IMR-90 (cell line): ENCODE measurements at regions of chr3 and their contacts with region 1.

Region 1: DNA sequence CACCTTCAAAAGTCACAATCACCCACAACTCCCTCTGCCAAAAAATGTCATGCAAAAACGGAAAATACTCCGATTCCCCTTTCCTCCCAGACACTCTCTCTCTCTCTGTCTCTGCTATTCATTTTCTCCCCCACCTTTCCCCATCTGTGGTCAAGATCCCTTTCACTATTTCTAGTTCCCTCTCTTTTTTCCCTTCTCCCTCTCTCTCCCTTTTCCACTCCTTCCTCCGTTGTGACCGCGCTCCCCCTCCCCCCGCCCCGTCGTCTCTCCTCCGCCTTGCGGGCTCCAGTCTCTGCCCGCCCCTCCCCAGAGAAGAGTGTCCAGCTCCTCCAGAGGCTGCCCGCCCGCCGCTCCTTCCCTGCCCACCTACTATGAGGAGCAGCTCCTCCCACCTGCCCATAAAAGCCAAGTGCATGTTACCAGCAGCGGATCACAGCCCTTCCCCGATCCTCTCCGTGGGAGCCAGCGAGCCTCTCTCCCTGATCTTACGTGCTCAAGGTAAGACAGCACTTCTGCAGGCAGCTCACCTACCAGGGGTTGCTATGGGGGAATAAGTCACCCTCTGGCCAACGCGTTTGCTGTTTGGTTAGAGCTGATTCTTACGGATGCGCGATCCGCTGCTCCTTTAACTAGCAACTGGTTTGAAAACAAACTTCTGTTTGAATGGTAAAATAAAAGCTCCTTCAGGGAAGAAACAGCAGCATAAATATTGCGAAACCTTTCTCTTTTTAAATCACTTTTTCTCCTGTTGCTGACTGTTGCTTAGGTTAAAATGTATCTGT is at the start of gene COL8A1:
- DNase-seq: peak; percentile 77
- ATAC-seq: peak; percentile 79
- H3K4me3 ChIP-seq: peak within 1 kb of the TSS; percentile 62
- H3K27ac ChIP-seq: peak within 1 kb of the TSS; percentile 97
- H3K4me1 ChIP-seq: peaks cover 7% of the 10 kb centered on the region; the same call in 1 of the 2 replicates
- H3K27me3 ChIP-seq: no peaks in the 10 kb centered on the region
- CTCF ChIP-seq: no peak
- POLR2A ChIP-seq: peak; percentile 82
- RAD21 ChIP-seq: 0 out of 2 replicates have a peak, but pooled peaks have one; percentile 8
- total RNA-seq, gene COL8A1: 109 and 119 TPM in 2 replicates

Region 2: DNA sequence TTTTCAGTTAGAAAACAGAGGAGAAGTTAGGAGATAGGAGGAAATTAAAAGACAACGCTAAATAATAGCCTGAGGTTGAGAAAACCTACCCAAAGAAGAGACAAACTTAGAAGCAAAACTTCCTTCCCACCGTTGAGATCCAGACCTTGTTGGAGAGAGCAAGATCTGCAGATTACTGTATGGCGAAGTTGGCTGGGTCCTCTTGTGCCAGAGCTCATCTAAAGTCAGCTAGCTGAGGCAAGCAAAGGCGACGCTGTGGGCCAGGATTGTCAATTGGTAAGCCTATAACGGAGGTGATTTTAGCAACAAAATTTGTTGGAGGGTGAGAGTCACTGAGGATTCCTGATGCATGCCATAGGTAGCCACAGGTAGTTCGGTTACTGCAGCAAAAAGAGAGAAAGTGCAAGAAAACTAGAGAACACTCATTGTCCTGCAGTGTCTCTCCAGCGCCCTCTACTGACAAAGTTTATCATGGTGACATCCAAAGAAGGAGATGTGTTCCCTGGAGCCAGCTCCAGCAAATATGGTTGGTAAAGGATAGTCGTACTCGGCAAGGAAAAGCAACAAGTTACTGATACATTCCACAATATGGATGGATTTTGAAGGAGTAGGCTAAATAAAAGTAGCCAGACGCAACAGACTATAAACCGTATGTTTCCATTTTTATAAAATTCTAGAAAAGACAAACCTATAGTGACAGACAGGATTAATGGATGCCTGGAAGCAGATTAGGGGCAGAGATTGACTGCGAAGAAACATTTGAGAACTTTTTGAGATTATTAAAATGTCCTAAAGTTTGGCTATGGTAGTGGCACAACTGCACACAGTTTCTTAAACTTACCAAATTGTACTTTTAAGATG is 1294.5 kb before region 1 on chr3:
- CTCF ChIA-PET with region 1: no interaction called
- POLR2A ChIA-PET with region 1: no interaction called
- dilution Hi-C with region 1: no loop called
- in situ Hi-C with region 1: no loop called
- intact Hi-C with region 1: no loop called
- DNase-seq: peak; percentile 17
- ATAC-seq: peak; percentile 57
- H3K4me3 ChIP-seq: no peak overlapping the region
- H3K27ac ChIP-seq: no peak overlapping the region
- H3K4me1 ChIP-seq: no peaks in the 10 kb centered on the region
- H3K27me3 ChIP-seq: no peaks in the 10 kb centered on the region
- CTCF ChIP-seq: peak; percentile 49
- POLR2A ChIP-seq: no peak
- RAD21 ChIP-seq: no peak

Region 3: DNA sequence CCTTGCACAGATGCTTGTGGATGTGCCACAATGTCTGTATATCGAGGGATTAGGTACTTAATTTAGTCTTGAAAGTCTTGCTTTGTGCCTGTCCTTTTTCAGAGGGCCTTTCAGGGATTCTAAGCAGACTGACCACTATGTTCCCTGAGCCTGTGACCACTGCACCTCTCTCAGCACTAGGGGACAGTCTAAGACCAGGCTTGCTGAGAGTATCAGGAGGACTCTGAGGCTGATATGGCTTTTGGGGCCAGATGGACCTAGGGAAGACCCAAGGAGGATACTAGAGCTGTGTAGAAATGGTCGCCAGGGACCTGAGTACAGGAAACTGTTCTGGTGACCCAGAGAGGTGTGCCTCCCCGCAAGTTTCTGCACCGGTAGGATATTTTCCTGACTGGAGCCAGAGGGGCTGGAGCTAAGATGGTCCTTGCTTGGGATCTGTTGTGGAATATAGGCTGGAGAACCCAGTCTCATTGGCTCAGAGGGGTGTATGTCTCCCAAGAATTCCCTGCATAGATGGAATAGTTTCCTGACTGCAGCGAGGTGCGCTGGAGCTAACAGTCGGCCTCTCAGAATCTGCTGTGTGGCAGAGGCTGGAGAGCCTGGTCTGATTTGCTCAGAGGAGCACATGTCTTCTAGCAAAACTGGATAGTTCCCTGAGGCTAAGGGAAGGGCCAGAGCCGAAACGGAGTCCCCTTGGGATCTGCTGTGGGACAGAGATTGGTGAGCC is 523.6 kb before region 1 on chr3:
- CTCF ChIA-PET with region 1: no interaction called
- POLR2A ChIA-PET with region 1: interaction called, 6 read pairs
- dilution Hi-C with region 1: no loop called
- in situ Hi-C with region 1: no loop called
- intact Hi-C with region 1: loop called (anchors 5 kb)
- DNase-seq: peak; percentile 69
- ATAC-seq: peak; percentile 95
- H3K4me3 ChIP-seq: no peak overlapping the region
- H3K27ac ChIP-seq: no peak overlapping the region
- H3K4me1 ChIP-seq: peaks cover 4% of the 10 kb centered on the region; the same call in 1 of the 2 replicates
- H3K27me3 ChIP-seq: no peaks in the 10 kb centered on the region
- CTCF ChIP-seq: peak; percentile 93
- POLR2A ChIP-seq: peak; percentile 57; the same call in 1 of the 2 replicates
- RAD21 ChIP-seq: peak; percentile 99

Region 4: DNA sequence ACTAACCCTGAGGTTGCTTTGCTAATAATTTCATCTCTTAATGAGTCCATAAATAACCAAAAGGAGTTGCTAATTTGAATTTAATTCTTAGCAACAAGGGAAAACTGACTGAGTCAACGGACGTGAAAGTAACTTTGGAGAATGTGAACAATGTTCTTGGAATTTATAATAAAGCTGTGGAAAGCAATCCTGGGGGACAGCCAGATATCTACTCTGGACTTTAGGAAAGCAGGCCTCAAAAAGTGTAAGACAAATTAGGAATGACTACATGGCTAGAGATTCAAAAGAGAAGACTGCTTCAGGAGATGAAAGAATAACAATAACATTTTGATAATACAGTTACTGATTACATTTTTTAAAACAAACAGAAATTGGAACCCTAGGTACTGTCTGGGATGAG is 318.4 kb before region 1 on chr3:
- CTCF ChIA-PET with region 1: no interaction called
- POLR2A ChIA-PET with region 1: no interaction called
- dilution Hi-C with region 1: no loop called
- in situ Hi-C with region 1: no loop called
- intact Hi-C with region 1: loop called (anchors 5 kb)
- DNase-seq: peak; percentile 94
- ATAC-seq: peak; percentile 87
- H3K4me3 ChIP-seq: no peak overlapping the region
- H3K27ac ChIP-seq: no peak overlapping the region
- H3K4me1 ChIP-seq: peaks cover 5% of the 10 kb centered on the region
- H3K27me3 ChIP-seq: peaks cover 2% of the 10 kb centered on the region
- CTCF ChIP-seq: no peak
- POLR2A ChIP-seq: no peak
- RAD21 ChIP-seq: no peak

Region 5: DNA sequence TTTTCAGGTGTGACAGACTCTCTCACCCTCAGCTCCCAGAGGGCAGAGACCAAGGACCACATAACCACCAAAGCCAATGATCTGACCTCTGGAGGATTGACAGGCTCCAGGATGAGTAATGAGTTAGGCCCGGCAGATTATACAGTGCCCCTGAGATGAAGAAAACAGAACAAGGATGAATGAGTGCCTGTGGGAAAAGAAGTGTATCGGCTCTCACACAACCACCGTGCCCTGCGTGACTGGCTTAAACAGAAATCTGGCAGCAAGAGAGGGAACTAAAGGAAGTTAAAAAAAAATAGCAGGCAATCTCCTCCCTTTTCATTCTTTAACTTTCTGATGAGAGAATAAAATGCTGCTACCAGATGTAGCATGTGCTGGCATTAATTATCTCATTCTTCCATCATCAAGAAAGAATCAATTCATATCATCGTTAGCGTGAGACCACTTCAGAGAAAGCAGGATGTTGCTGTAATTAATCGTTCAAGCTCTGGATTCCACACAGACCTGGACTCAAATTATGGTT is 227.5 kb before region 1 on chr3:
- CTCF ChIA-PET with region 1: no interaction called
- POLR2A ChIA-PET with region 1: interaction called, 4 read pairs
- dilution Hi-C with region 1: no loop called
- in situ Hi-C with region 1: no loop called
- intact Hi-C with region 1: loop called (anchors 5 kb)
- DNase-seq: peak; percentile 79
- ATAC-seq: peak; percentile 48
- H3K4me3 ChIP-seq: no peak overlapping the region
- H3K27ac ChIP-seq: peak overlapping the region; percentile 41
- H3K4me1 ChIP-seq: peaks cover 10% of the 10 kb centered on the region
- H3K27me3 ChIP-seq: no peaks in the 10 kb centered on the region
- CTCF ChIP-seq: no peak
- POLR2A ChIP-seq: no peak
- RAD21 ChIP-seq: no peak

Region 6: GRCh38 chr3:99532246-99532645 is 106.1 kb before region 1 on chr3:
- CTCF ChIA-PET with region 1: interaction called, 4 read pairs
- POLR2A ChIA-PET with region 1: no interaction called
- dilution Hi-C with region 1: no loop called
- in situ Hi-C with region 1: no loop called
- intact Hi-C with region 1: loop called (anchors 2 kb)
- DNase-seq: peak; percentile 77
- ATAC-seq: peak; percentile 64
- H3K4me3 ChIP-seq: no peak overlapping the region
- H3K27ac ChIP-seq: no peak overlapping the region
- H3K4me1 ChIP-seq: peaks cover 13% of the 10 kb centered on the region
- H3K27me3 ChIP-seq: no peaks in the 10 kb centered on the region
- CTCF ChIP-seq: peak; percentile 69
- POLR2A ChIP-seq: no peak
- RAD21 ChIP-seq: peak; percentile 75

Region 7: GRCh38 chr3:100352296-100353231 is 714.2 kb after region 1 on chr3:
- CTCF ChIA-PET with region 1: no interaction called
- POLR2A ChIA-PET with region 1: no interaction called
- dilution Hi-C with region 1: no loop called
- in situ Hi-C with region 1: no loop called
- intact Hi-C with region 1: no loop called
- DNase-seq: peak; percentile 71
- ATAC-seq: peak; percentile 61
- H3K4me3 ChIP-seq: no peak overlapping the region
- H3K27ac ChIP-seq: no peak overlapping the region
- H3K4me1 ChIP-seq: no peaks in the 10 kb centered on the region
- H3K27me3 ChIP-seq: no peaks in the 10 kb centered on the region
- CTCF ChIP-seq: no peak
- POLR2A ChIP-seq: no peak
- RAD21 ChIP-seq: no peak